Activated CD4-positive, alpha-beta memory T cell treated with anti-CD3 and anti-CD28 coated beads for 36 hours (primary cell): ENCODE measurements at regions of chr17 and their contacts with region 1.

Region 1: DNA sequence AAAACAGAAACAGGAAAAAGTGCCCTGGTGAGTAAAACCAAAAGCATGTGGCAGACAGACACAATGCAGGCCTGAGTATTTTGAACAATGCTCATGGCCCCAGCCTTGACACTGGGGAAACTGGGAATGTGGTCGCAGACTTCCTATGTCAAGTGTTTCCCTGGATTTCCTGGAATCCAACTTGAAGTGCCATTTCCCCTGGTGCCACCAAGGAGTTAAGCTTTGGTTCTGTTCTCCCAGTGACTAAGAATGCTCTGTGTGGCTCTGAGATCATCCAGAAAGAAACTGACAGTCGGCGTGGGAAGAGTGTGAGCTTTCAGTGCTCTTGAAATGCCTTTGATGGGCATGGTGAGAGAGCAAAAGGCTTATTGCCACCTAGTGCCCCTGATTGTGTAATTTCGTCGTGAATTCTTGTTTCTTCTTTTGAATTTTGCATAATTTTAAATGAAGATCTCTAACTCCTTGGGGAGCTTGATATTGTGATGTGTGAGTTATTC is 96.0 kb downstream of the YPEL2 start:
- DNase-seq: peak; percentile 82
- H3K4me3 Mint-ChIP-seq: no peak overlapping the region
- H3K27ac Mint-ChIP-seq: no peak overlapping the region
- H3K4me1 Mint-ChIP-seq: peaks cover 33% of the 10 kb centered on the region
- H3K27me3 Mint-ChIP-seq: peaks cover under 1% of the 10 kb centered on the region

Region 2: GRCh38 chr17:59093702-59094231 is 333.7 kb before region 1 on chr17:
- CTCF ChIA-PET with region 1: no interaction called
- POLR2A ChIA-PET with region 1: no interaction called
- intact Hi-C with region 1: no loop called
- DNase-seq: no peak
- H3K4me3 Mint-ChIP-seq: no peak overlapping the region
- H3K27ac Mint-ChIP-seq: no peak overlapping the region
- H3K4me1 Mint-ChIP-seq: peaks cover 13% of the 10 kb centered on the region
- H3K27me3 Mint-ChIP-seq: no peaks in the 10 kb centered on the region

Region 3: GRCh38 chr17:59311130-59311920 is 116.1 kb before region 1 on chr17:
- CTCF ChIA-PET with region 1: interaction called, 30 read pairs
- POLR2A ChIA-PET with region 1: no interaction called
- intact Hi-C with region 1: loop called (anchors 1 kb)
- DNase-seq: peak; percentile 39
- H3K4me3 Mint-ChIP-seq: no peak overlapping the region
- H3K27ac Mint-ChIP-seq: peak overlapping the region; percentile 5
- H3K4me1 Mint-ChIP-seq: peaks cover 3% of the 10 kb centered on the region
- H3K27me3 Mint-ChIP-seq: no peaks in the 10 kb centered on the region